ENCODE measurements at regions of chr9 and their contacts with region 1.

Region 1: GRCh38 chr9:36903541-36904435 is 130.3 kb downstream of the PAX5 start:
- DNase-seq: peak; percentile 61
- H3K4me3 Mint-ChIP-seq: no peak overlapping the region
- H3K27ac Mint-ChIP-seq: no peak overlapping the region
- H3K4me1 Mint-ChIP-seq: peaks cover 6% of the 10 kb centered on the region
- H3K27me3 Mint-ChIP-seq: peaks cover 25% of the 10 kb centered on the region

Region 2: GRCh38 chr9:36950389-36950788 is 46.6 kb after region 1 on chr9:
- intact Hi-C with region 1: loop called (anchors 5 kb)
- DNase-seq: no peak
- H3K4me3 Mint-ChIP-seq: no peak overlapping the region
- H3K27ac Mint-ChIP-seq: no peak overlapping the region
- H3K4me1 Mint-ChIP-seq: no peaks in the 10 kb centered on the region
- H3K27me3 Mint-ChIP-seq: peaks cover 45% of the 10 kb centered on the region

Measured in activated CD4-positive, alpha-beta T cell treated with anti-CD3 and anti-CD28 coated beads, Interleukin-2, amount 10 ng/mL, durations not matched to agents 24 days and 14 days (primary cell).